ENCODE measurements at regions of chrX and their contacts with region 1.

Region 1: GRCh38 chrX:15349046-15349445 is 13.7 kb upstream of the PIGA start:
- DNase-seq: no peak
- ATAC-seq: peak; percentile 93
- H3K4me3 ChIP-seq: no peak overlapping the region
- H3K27ac ChIP-seq: no peak overlapping the region
- H3K4me1 ChIP-seq: no peaks in the 10 kb centered on the region
- H3K27me3 ChIP-seq: no peaks in the 10 kb centered on the region
- CTCF ChIP-seq: peak; percentile 40 to 61 (median 43); a peak in 5 of 6 replicates
- EP300 ChIP-seq: no peak
- POLR2A ChIP-seq: no peak
- RAD21 ChIP-seq: peak; percentile 78

Region 2: GRCh38 chrX:15335135-15336022 is 13.7 kb before region 1 on chrX and contains the start of gene PIGA:
- CTCF ChIA-PET with region 1: interaction called, 18 read pairs
- POLR2A ChIA-PET with region 1: no interaction called
- RAD21 ChIA-PET with region 1: no interaction called
- SMC1A ChIA-PET with region 1: interaction called, 21 read pairs
- in situ Hi-C with region 1: no loop called
- intact Hi-C with region 1: no loop called
- DNase-seq: peak; percentile 82
- ATAC-seq: peak; percentile 98
- H3K4me3 ChIP-seq: peak within 1 kb of the TSS; percentile 76
- H3K27ac ChIP-seq: peak within 1 kb of the TSS; percentile 60
- H3K4me1 ChIP-seq: no peaks in the 10 kb centered on the region
- H3K27me3 ChIP-seq: no peaks in the 10 kb centered on the region
- CTCF ChIP-seq: no peak
- EP300 ChIP-seq: no peak
- POLR2A ChIP-seq: peak; percentile 88
- RAD21 ChIP-seq: no peak
- polyA plus RNA-seq, gene PIGA: 4.9 to 6.8 TPM

Region 3: GRCh38 chrX:15366506-15367352 is 17.7 kb after region 1 on chrX:
- CTCF ChIA-PET with region 1: interaction called, 11 read pairs
- POLR2A ChIA-PET with region 1: no interaction called
- RAD21 ChIA-PET with region 1: no interaction called
- SMC1A ChIA-PET with region 1: interaction called, 6 read pairs
- in situ Hi-C with region 1: no loop called
- intact Hi-C with region 1: no loop called
- DNase-seq: no peak
- ATAC-seq: no peak
- H3K4me3 ChIP-seq: no peak overlapping the region
- H3K27ac ChIP-seq: no peak overlapping the region
- H3K4me1 ChIP-seq: no peaks in the 10 kb centered on the region
- H3K27me3 ChIP-seq: no peaks in the 10 kb centered on the region; a peak in 1 of 4 replicates
- CTCF ChIP-seq: no peak
- EP300 ChIP-seq: no peak
- POLR2A ChIP-seq: no peak
- RAD21 ChIP-seq: no peak

Region 4: GRCh38 chrX:15564981-15565579 is 216.0 kb after region 1 on chrX:
- CTCF ChIA-PET with region 1: interaction called, 6 read pairs
- POLR2A ChIA-PET with region 1: no interaction called
- RAD21 ChIA-PET with region 1: no interaction called
- SMC1A ChIA-PET with region 1: interaction called, 3 read pairs
- in situ Hi-C with region 1: loop called (anchors 5 kb)
- intact Hi-C with region 1: loop called (anchors 5 kb)
- DNase-seq: peak; percentile 9
- ATAC-seq: peak; percentile 95
- H3K4me3 ChIP-seq: no peak overlapping the region
- H3K27ac ChIP-seq: no peak overlapping the region
- H3K4me1 ChIP-seq: no peaks in the 10 kb centered on the region
- H3K27me3 ChIP-seq: no peaks in the 10 kb centered on the region; a peak in 1 of 4 replicates
- CTCF ChIP-seq: peak; percentile 55 to 65 (median 57)
- EP300 ChIP-seq: no peak
- POLR2A ChIP-seq: no peak
- RAD21 ChIP-seq: peak; percentile 64

Measured in GM12878 (cell line).